Aorta (tissue), 5 donors: ENCODE measurements at regions of chr18 and their contacts with region 1.

Region 1: GRCh38 chr18:830315-830901 is 18.4 kb upstream of the YES1 start:
- DNase-seq: no peak
- ATAC-seq: peak; percentile 60
- H3K4me3 ChIP-seq: no peak overlapping the region
- H3K27ac ChIP-seq: no peak overlapping the region
- H3K4me1 ChIP-seq: no peaks in the 10 kb centered on the region
- H3K27me3 ChIP-seq: no peaks in the 10 kb centered on the region

Region 2: DNA sequence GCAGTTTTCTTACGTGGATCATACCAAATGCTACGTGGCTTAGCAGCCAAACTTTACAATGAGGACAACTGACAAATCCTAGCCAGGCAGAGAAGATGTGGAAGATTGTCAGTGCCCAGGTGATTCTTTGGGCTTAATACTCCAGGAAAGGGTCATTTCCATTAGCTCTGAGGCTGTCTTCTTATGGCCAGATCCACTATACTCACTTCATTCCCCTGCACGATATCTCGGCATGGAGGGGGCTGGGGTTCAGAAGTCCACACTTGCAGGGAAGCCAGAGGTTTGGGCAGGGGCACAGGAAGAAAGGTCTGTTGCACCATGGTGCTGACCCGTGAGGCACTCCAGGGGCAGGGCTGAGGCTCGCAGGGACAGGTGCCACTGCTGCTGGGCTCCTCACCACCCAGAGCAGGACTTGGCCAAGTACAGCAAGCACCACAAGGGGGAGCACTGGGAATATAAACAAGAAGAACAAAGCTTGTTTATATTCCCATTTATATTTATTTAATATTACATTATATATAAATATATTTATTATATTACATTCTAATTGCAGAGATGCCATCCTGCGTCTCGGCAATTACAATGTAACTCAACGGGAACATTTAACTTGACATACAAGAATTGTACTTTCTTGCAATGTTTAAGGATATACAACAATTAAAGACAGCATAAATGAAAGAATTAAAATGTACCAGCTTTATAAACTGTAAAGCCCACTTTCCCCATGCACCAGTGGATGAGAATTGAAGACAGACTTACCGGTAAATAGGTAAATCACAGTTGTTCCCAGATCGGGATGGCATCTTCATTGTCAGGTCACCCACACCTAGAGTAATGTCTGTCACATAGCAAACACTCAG is 206.4 kb before region 1 on chr18:
- intact Hi-C with region 1: loop called (anchors 2 to 10 kb)
- DNase-seq: peak in 1 of 2 donors; percentile 74
- ATAC-seq: peak; percentile 64
- H3K4me3 ChIP-seq: no peak overlapping the region
- H3K27ac ChIP-seq: no peak overlapping the region
- H3K4me1 ChIP-seq: no peaks in the 10 kb centered on the region
- H3K27me3 ChIP-seq: peaks cover 0 to 1% of the 10 kb centered on the region in 2 donors

Region 3: DNA sequence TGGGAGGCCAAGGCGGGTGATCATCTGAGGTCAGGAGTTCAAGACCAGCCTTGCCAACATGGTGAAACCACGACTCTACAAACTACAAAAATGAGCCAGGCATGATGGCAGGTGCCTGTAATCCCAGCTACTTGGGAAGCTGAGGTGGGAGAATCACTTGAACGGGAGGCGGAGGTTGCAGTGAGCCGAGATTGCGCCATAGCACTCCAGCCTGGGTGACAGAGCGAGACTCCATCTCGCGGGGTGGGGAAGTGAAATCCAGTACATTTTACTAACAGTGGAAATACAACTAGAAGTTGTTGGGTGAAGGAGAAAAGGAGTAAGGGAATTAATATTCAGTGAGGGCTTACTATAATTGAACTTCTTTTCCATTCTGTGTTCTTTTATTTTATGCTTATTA is 104.8 kb before region 1 on chr18:
- intact Hi-C with region 1: no loop called
- DNase-seq: no peak
- ATAC-seq: no peak
- H3K4me3 ChIP-seq: no peak overlapping the region
- H3K27ac ChIP-seq: no peak overlapping the region
- H3K4me1 ChIP-seq: no peaks in the 10 kb centered on the region
- H3K27me3 ChIP-seq: no peaks in the 10 kb centered on the region

Region 4: GRCh38 chr18:741931-742512 is 88.4 kb before region 1 on chr18:
- intact Hi-C with region 1: loop called (anchors 2 kb)
- DNase-seq: no peak
- ATAC-seq: peak; percentile 80
- H3K4me3 ChIP-seq: no peak overlapping the region
- H3K27ac ChIP-seq: no peak overlapping the region
- H3K4me1 ChIP-seq: no peaks in the 10 kb centered on the region
- H3K27me3 ChIP-seq: no peaks in the 10 kb centered on the region